ENCODE measurements at regions of chr1 and their contacts with region 1.

Region 1: GRCh38 chr1:84433258-84434080 is 35.2 kb downstream of the DNASE2B start:
- DNase-seq: peak in 1 of 2 donors; percentile 68
- H3K4me3 ChIP-seq: no peak overlapping the region
- CTCF ChIP-seq: no peak
- POLR2A ChIP-seq: no peak

Region 2: GRCh38 chr1:84133479-84133878 is 300.0 kb before region 1 on chr1:
- intact Hi-C with region 1: loop called (anchors 10 kb)
- DNase-seq: no peak
- H3K4me3 ChIP-seq: no peak overlapping the region
- CTCF ChIP-seq: no peak
- POLR2A ChIP-seq: no peak

Region 3: DNA sequence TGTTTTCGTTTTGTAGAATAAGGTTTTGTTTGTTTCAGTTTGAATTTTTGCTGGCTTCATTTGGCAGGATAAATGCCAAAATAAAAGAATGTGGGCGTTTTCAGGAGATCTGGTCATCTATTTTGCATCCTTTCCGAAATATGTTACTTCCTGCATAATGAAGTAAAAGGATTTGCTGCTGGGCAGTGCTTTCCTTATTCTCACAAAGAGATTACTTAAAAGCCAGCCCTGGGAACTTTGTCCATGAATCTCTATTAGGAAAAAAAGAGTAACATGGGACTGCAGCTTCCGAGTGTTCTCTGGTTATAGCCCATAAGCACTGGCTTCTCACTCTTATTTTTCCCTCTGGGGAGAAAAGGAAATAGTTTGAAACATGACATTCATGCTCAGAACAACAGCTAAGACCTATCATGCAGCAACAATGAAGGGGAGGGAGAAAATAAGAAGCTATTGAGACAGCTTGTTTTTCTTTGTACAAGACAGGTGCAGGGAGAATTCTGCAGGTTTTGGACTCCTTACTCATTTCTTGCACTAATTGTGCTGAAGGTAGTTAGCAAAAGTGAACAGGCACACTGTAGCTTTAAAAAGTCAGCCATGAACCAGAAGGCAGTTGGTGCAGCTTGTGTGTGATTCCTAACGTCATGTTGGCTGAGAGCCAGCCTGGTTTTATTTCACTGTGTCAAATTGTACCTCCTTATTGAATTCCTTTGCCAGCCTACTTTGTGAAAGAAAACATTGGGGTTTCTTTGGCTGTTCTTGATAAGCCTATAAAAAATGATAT is 132.3 kb before region 1 on chr1 and contains the start of gene SAMD13:
- intact Hi-C with region 1: no loop called
- DNase-seq: peak; percentile 83 to 90
- H3K4me3 ChIP-seq: no peak within 1 kb of the TSS
- CTCF ChIP-seq: no peak
- POLR2A ChIP-seq: no peak
- total RNA-seq, gene SAMD13: 0.88 to 1.1 TPM in 2 of 4 donors, not detected in the others

Region 4: DNA sequence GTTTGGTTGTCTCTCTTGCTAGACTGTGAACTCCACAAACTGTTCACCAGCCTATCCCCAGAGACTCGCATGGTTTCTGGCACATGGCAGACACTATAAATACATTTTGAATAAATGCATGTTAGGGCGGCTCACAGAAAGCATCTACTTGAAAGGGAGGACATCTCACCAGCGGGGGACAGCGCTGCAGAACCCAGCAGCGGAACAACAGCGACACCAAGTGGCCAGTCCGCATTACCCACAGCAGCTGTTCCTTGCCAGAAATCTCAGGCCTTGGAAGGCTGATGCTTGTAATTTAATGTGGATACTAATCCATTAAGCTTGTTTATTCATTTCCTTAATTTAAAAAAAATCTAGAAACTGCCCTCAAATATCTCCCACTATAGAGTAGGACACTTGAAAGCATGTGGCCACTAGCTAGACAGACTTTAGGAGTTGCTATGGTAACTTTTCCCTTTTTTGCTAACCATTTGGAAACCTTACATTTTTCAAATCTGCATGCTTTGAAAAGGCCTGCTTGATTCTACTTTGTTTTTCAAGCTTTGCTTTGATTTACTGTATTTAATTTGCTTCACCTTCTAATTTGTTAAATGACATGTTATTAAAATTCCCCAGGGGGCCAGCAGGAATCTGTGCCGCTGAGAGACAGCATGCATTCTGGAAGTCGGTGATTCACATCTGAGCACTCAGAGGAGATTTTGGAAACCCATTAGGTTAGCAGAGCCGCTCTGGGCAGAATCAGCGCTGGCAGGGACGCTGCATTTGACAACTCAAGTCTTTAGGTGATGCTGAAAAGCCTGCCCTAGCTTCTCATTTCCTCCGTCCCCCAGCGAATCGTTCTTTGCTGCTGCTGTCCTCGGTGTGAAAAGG is 320.3 kb after region 1 on chr1:
- intact Hi-C with region 1: loop called (anchors 10 kb)
- DNase-seq: peak in 1 of 2 donors; percentile 47
- H3K4me3 ChIP-seq: no peak overlapping the region
- CTCF ChIP-seq: peak in 1 of 3 donors; percentile 69
- POLR2A ChIP-seq: no peak

Region 5: DNA sequence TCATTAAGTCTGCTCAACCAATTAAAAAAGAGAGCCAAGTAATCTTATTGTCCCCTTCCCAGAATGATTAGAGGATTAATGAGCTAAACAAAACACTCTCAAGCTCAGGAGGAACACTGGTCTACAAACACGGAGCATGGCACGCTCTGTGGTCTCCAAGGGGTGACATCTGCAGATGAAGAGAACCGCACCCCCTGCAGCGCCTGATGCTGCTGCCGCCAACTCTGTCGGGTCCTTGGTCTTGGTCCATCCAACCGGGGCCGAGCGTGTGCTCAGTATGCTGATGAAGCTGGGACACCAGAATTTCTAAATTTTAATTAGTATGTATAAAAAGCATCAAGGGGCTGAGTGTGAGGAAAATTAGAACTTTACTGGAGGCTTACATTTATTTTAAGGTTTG is 376.9 kb after region 1 on chr1:
- intact Hi-C with region 1: no loop called
- DNase-seq: no peak
- H3K4me3 ChIP-seq: no peak overlapping the region
- CTCF ChIP-seq: no peak
- POLR2A ChIP-seq: no peak